Ovary (tissue), 10 donors: ENCODE measurements at regions of chr6 and their contacts with region 1.

Region 1: DNA sequence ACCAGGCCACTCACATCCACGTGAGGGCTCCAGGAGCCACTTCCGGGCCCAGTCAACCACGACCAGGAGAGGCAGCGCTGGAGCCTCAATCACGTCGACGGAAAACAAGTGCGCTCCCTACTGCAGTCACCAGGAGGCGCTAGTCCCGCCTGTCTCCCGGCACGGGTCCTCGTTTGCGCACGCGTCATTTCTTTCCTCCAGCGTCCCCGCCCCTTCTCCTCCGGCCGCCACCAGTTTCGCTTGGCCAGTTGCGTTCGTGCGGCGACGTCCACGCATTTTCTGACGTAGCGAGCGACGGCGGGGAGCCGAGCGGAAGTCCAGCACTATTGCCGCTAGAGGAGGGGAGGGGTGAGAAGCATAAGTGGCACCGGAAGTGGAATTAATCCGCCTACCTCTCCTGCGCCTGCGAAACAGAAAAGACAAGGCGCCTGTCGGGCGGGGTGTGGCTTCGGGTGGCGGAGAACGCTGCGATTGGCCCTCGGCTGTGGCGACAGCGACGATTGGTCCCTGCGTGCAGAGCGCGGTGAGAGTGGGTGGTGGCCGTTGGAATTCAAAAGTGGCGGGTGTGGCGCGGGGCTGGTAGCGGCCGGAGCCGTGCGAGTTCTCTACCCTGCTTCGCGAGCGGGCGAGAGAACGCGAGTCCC is at the start of gene KIFC1:
- DNase-seq: peak; percentile 99 to 100 (median 99)
- H3K4me3 ChIP-seq: peak within 1 kb of the TSS; percentile 67
- H3K27ac ChIP-seq: peak within 1 kb of the TSS; percentile 84 to 90
- H3K4me1 ChIP-seq: peaks cover 6% of the 10 kb centered on the region
- H3K27me3 ChIP-seq: no peaks in the 10 kb centered on the region
- CTCF ChIP-seq: peak; percentile 98 to 99 (median 99)
- EP300 ChIP-seq: peak; percentile 87
- POLR2A ChIP-seq: no peak
- total RNA-seq, gene KIFC1: 0.60 to 3.9 (median 2.2) TPM

Region 2: DNA sequence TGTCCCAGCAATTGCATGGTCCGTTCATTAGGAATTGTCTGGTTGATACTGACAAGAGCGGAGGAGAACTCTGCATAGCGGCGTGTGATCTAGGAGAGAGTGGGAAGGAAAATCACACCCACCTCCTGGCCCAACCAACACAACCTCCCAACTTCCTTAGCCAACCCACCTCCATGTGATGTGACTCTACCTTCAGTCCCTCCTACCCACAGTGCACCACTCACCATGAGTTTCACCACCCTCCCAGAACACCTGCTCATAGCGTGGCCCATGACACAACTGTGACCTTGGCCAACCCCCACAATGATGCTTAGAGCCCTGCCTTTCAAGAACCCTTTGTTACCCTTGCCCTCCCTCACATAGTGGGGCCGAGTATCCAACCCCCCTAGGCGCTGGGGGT is 127.4 kb before region 1 on chr6:
- intact Hi-C with region 1: no loop called
- DNase-seq: no peak
- H3K4me3 ChIP-seq: no peak overlapping the region
- H3K27ac ChIP-seq: no peak overlapping the region
- H3K4me1 ChIP-seq: no peaks in the 10 kb centered on the region
- H3K27me3 ChIP-seq: no peaks in the 10 kb centered on the region
- CTCF ChIP-seq: no peak
- EP300 ChIP-seq: no peak
- POLR2A ChIP-seq: no peak

Region 3: DNA sequence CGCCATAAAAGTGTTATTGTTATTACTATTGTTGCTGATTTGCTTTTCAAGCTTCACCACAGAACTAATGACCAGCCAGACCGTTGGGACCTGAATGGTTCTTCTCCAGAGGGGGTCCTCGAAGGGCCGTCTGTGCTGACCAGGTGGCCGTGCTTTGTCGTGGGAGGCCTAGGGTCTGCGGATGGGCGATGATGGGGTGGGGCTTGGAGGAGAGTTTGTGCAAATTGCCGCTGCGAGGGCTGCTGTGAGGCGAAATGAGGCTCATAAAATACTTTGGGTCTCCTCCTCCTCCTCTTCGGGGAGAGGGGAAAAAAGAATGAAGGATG is 67.8 kb before region 1 on chr6:
- intact Hi-C with region 1: no loop called
- DNase-seq: peak in 2 of 5 donors; percentile 53 to 55
- H3K4me3 ChIP-seq: peak overlapping the region; percentile 81
- H3K27ac ChIP-seq: peak overlapping the region in 1 of 2 donors; percentile 66
- H3K4me1 ChIP-seq: peaks cover 6% of the 10 kb centered on the region
- H3K27me3 ChIP-seq: no peaks in the 10 kb centered on the region
- CTCF ChIP-seq: no peak
- EP300 ChIP-seq: no peak
- POLR2A ChIP-seq: no peak

Region 4: GRCh38 chr6:33425668-33426577 is 34.5 kb after region 1 on chr6:
- intact Hi-C with region 1: loop called in 1 of 4 experiments (anchors 2 kb)
- DNase-seq: peak; percentile 93 to 94 (median 94)
- H3K4me3 ChIP-seq: peak overlapping the region; percentile 59
- H3K27ac ChIP-seq: peak overlapping the region; percentile 80 to 96
- H3K4me1 ChIP-seq: peaks cover 29% of the 10 kb centered on the region
- H3K27me3 ChIP-seq: no peaks in the 10 kb centered on the region
- CTCF ChIP-seq: peak; percentile 44 to 58 (median 49)
- EP300 ChIP-seq: no peak
- POLR2A ChIP-seq: peak; percentile 26